Activated CD4-positive, alpha-beta T cell treated with anti-CD3 and anti-CD28 coated beads for 36 hours (primary cell): ENCODE measurements at regions of chr10 and their contacts with region 1.

Region 1: GRCh38 chr10:50431791-50432190 is 180.5 kb upstream of the ASAH2 start:
- DNase-seq: peak; percentile 42
- ATAC-seq: peak; percentile 69
- H3K4me3 Mint-ChIP-seq: no peak overlapping the region
- H3K27ac Mint-ChIP-seq: peak overlapping the region; percentile 49
- H3K4me1 Mint-ChIP-seq: peaks cover 30% of the 10 kb centered on the region
- H3K27me3 Mint-ChIP-seq: no peaks in the 10 kb centered on the region

Region 2: GRCh38 chr10:50396491-50397311 is 35.1 kb before region 1 on chr10:
- CTCF ChIA-PET with region 1: no interaction called
- POLR2A ChIA-PET with region 1: no interaction called
- intact Hi-C with region 1: loop called (anchors 1 to 2 kb)
- DNase-seq: peak; percentile 43
- ATAC-seq: peak; percentile 91
- H3K4me3 Mint-ChIP-seq: peak overlapping the region; percentile 49
- H3K27ac Mint-ChIP-seq: peak overlapping the region; percentile 16
- H3K4me1 Mint-ChIP-seq: peaks cover 44% of the 10 kb centered on the region
- H3K27me3 Mint-ChIP-seq: no peaks in the 10 kb centered on the region

Region 3: DNA sequence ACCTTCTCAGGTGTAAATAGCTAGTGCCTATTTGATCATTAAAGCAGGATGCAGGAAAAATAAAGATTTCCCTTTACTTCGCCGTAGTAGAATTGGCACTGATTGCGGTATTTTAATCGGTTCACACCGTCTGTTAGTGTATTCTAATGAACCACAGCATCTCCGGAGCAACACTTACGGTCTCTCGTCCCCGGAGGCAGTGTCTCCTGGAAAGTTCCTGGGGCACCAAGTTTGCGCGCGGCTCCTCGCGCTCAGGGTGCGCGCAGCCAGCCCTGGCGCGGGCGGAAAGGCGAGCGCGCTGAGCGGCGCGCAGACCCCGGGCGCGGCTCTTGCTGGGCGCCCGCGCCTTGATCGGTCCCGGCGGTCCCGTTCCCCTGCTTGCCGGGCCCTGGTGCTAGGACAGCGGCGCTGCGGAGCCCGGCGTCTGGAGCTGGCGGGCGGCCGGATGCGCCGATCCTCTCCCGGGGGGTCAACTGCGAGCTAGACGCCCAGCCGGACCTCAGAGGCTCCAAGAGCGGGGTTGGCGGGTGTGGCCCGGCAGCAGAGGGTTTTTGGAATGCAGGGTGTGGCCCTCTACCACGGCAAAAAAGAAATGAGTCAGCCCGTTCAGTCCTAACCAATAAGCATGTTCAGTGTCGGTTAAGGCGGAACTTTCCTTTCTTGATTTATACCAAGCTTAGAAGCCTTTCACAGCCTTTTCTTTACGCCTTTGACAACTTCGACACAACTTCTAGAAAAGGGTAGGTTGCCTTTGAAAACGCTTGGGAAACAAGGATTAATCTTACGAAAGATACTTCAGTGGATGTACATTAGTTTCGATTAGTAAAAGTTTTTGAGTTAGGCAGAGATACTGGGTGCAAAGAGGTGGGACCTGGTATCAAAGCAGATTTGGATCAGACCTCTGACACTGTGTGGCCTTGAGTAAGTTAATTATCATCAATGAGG is 13.6 kb before region 1 on chr10:
- CTCF ChIA-PET with region 1: interaction called, 5 read pairs
- POLR2A ChIA-PET with region 1: no interaction called
- intact Hi-C with region 1: loop called (anchors 1 to 2 kb)
- DNase-seq: peak; percentile 66
- ATAC-seq: peak; percentile 91
- H3K4me3 Mint-ChIP-seq: peak overlapping the region; percentile 76
- H3K27ac Mint-ChIP-seq: peak overlapping the region; percentile 64
- H3K4me1 Mint-ChIP-seq: peaks cover 41% of the 10 kb centered on the region
- H3K27me3 Mint-ChIP-seq: no peaks in the 10 kb centered on the region

Region 4: GRCh38 chr10:50508315-50509051 is 76.7 kb after region 1 on chr10:
- CTCF ChIA-PET with region 1: no interaction called
- POLR2A ChIA-PET with region 1: no interaction called
- intact Hi-C with region 1: loop called (anchors 1 kb)
- DNase-seq: peak; percentile 61
- ATAC-seq: peak; percentile 56
- H3K4me3 Mint-ChIP-seq: no peak overlapping the region
- H3K27ac Mint-ChIP-seq: no peak overlapping the region
- H3K4me1 Mint-ChIP-seq: peaks cover 68% of the 10 kb centered on the region
- H3K27me3 Mint-ChIP-seq: peaks cover 3% of the 10 kb centered on the region

Region 5: GRCh38 chr10:50636618-50637579 is 205.1 kb after region 1 on chr10:
- CTCF ChIA-PET with region 1: interaction called, 3 read pairs
- POLR2A ChIA-PET with region 1: no interaction called
- intact Hi-C with region 1: loop called (anchors 1 kb)
- DNase-seq: peak; percentile 47
- ATAC-seq: peak; percentile 95
- H3K4me3 Mint-ChIP-seq: peak overlapping the region; percentile 9
- H3K27ac Mint-ChIP-seq: peak overlapping the region; percentile 24
- H3K4me1 Mint-ChIP-seq: peaks cover 28% of the 10 kb centered on the region
- H3K27me3 Mint-ChIP-seq: peaks cover 24% of the 10 kb centered on the region

Region 6: DNA sequence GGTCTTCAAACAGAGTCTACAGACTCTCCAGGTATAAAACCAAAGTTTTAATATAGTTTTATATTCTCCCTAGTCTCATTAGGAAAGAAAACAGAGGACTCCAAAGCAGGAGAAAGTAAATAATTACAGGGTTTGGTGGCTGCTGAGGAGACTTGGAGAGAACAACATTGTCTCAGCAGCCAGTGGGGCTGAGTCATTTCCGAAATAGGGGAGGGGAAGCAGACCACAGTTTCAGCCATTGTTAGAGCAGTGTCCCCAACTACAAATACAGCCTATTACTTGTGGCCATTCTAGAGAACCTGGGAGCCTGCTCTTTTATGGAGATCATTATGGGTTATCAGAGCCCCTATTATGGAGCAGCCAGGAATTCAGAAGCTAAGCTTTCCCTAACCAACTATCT is 497.9 kb after region 1 on chr10:
- CTCF ChIA-PET with region 1: no interaction called
- POLR2A ChIA-PET with region 1: no interaction called
- intact Hi-C with region 1: no loop called
- DNase-seq: no peak
- ATAC-seq: no peak
- H3K4me3 Mint-ChIP-seq: no peak overlapping the region
- H3K27ac Mint-ChIP-seq: no peak overlapping the region
- H3K4me1 Mint-ChIP-seq: no peaks in the 10 kb centered on the region
- H3K27me3 Mint-ChIP-seq: peaks cover 9% of the 10 kb centered on the region

Region 7: GRCh38 chr10:51301644-51302043 is 869.9 kb after region 1 on chr10:
- CTCF ChIA-PET with region 1: no interaction called
- POLR2A ChIA-PET with region 1: no interaction called
- intact Hi-C with region 1: no loop called
- DNase-seq: no peak
- ATAC-seq: no peak
- H3K4me3 Mint-ChIP-seq: no peak overlapping the region
- H3K27ac Mint-ChIP-seq: no peak overlapping the region
- H3K4me1 Mint-ChIP-seq: no peaks in the 10 kb centered on the region
- H3K27me3 Mint-ChIP-seq: peaks cover 2% of the 10 kb centered on the region